H1 (cell line): ENCODE measurements at regions of chr3 and their contacts with region 1.

Region 1: GRCh38 chr3:149879872-149880271 is 66.9 kb downstream of the RNF13 start:
- DNase-seq: peak in 1 of 2 experiments; percentile 64
- H3K4me3 ChIP-seq: no peak overlapping the region
- H3K27ac ChIP-seq: no peak overlapping the region
- H3K4me1 ChIP-seq: no peaks in the 10 kb centered on the region
- H3K27me3 ChIP-seq: no peaks in the 10 kb centered on the region
- CTCF ChIP-seq: peak in 2 of 3 experiments; percentile 37 to 74; a peak in 2 of 4 replicates
- EP300 ChIP-seq: no peak
- POLR2A ChIP-seq: no peak
- RAD21 ChIP-seq: peak; percentile 49 to 50

Region 2: GRCh38 chr3:149736175-149736952 is 143.5 kb before region 1 on chr3:
- CTCF ChIA-PET with region 1: no interaction called
- POLR2A ChIA-PET with region 1: no interaction called
- DNase-seq: no peak
- H3K4me3 ChIP-seq: no peak overlapping the region
- H3K27ac ChIP-seq: no peak overlapping the region
- H3K4me1 ChIP-seq: no peaks in the 10 kb centered on the region
- H3K27me3 ChIP-seq: no peaks in the 10 kb centered on the region
- CTCF ChIP-seq: no peak
- EP300 ChIP-seq: no peak
- POLR2A ChIP-seq: no peak
- RAD21 ChIP-seq: no peak

Region 3: GRCh38 chr3:149845570-149846244 is 34.2 kb before region 1 on chr3:
- CTCF ChIA-PET with region 1: interaction called, 10 read pairs
- POLR2A ChIA-PET with region 1: no interaction called
- DNase-seq: no peak
- H3K4me3 ChIP-seq: no peak overlapping the region
- H3K27ac ChIP-seq: no peak overlapping the region
- H3K4me1 ChIP-seq: no peaks in the 10 kb centered on the region; a peak in 1 of 7 replicates
- H3K27me3 ChIP-seq: no peaks in the 10 kb centered on the region
- CTCF ChIP-seq: no peak
- EP300 ChIP-seq: no peak
- POLR2A ChIP-seq: no peak
- RAD21 ChIP-seq: no peak

Region 4: GRCh38 chr3:149894205-149894604 is 14.3 kb after region 1 on chr3:
- CTCF ChIA-PET with region 1: interaction called, 16 read pairs
- POLR2A ChIA-PET with region 1: interaction called, 3 read pairs
- DNase-seq: no peak
- H3K4me3 ChIP-seq: no peak overlapping the region
- H3K27ac ChIP-seq: no peak overlapping the region
- H3K4me1 ChIP-seq: 0 out of 7 replicates have a peak, but pooled peaks cover 0 to 2% (median 0%) of the 10 kb centered on the region in 4 experiments
- H3K27me3 ChIP-seq: no peaks in the 10 kb centered on the region
- CTCF ChIP-seq: no peak
- EP300 ChIP-seq: no peak
- POLR2A ChIP-seq: no peak
- RAD21 ChIP-seq: no peak

Region 5: GRCh38 chr3:149908424-149908957 is 28.6 kb after region 1 on chr3:
- CTCF ChIA-PET with region 1: interaction called, 33 read pairs
- POLR2A ChIA-PET with region 1: no interaction called
- DNase-seq: no peak
- H3K4me3 ChIP-seq: no peak overlapping the region
- H3K27ac ChIP-seq: no peak overlapping the region
- H3K4me1 ChIP-seq: no peaks in the 10 kb centered on the region
- H3K27me3 ChIP-seq: no peaks in the 10 kb centered on the region
- CTCF ChIP-seq: no peak
- EP300 ChIP-seq: no peak
- POLR2A ChIP-seq: no peak
- RAD21 ChIP-seq: no peak

Region 6: DNA sequence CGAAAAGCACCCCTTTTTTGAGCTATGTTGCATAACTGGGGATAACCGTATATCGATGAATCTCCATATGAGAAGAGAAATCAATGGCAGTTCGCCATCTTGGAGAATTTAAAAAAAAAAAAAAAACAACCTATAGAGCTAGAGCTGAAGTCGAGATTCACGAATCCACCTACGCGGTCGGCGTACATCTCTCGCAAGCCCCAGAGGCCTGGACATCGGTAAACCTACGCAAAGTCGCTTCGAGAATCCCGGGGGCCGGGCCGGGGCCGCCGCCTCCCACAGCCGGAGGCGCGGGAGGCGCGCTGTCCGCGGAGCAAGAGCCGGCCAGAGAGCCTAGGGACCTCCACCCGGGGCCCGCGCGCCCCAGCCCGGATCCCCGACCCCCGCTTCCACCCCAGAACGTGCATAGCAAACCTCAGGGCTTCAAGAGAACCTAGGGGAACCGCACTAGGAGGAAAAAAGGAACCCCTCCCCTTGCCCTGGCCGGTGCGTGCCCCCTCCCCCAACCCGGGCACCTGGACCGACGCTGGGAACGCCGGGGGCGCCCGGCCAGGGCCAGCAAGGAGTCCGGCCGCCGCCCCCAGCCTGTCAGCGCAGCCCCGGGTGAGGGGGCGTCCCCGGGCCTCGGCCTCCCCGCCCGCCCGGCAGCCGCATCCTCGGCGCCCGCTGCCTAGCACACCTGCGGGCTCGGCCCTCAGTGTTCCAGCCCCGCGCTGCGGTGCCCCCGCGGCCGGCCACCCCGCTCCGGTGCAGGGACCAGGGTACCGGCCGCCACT is 90.3 kb after region 1 on chr3:
- CTCF ChIA-PET with region 1: no interaction called
- POLR2A ChIA-PET with region 1: no interaction called
- DNase-seq: peak in 1 of 2 experiments; percentile 83
- H3K4me3 ChIP-seq: peak overlapping the region; percentile 79 to 92 (median 88)
- H3K27ac ChIP-seq: peak overlapping the region; percentile 95
- H3K4me1 ChIP-seq: peaks cover 0 to 12% (median 3%) of the 10 kb centered on the region in 4 experiments; a peak in 4 of 7 replicates
- H3K27me3 ChIP-seq: no peaks in the 10 kb centered on the region
- CTCF ChIP-seq: no peak
- EP300 ChIP-seq: no peak
- POLR2A ChIP-seq: peak; percentile 39 to 68
- RAD21 ChIP-seq: no peak

Region 7: GRCh38 chr3:150069154-150069527 is 189.3 kb after region 1 on chr3:
- CTCF ChIA-PET with region 1: no interaction called
- POLR2A ChIA-PET with region 1: no interaction called
- DNase-seq: no peak
- H3K4me3 ChIP-seq: no peak overlapping the region
- H3K27ac ChIP-seq: no peak overlapping the region
- H3K4me1 ChIP-seq: no peaks in the 10 kb centered on the region
- H3K27me3 ChIP-seq: no peaks in the 10 kb centered on the region
- CTCF ChIP-seq: no peak
- EP300 ChIP-seq: no peak
- POLR2A ChIP-seq: no peak
- RAD21 ChIP-seq: no peak